Endothelial cell of umbilical vein (primary cell): ENCODE measurements at regions of chr3 and their contacts with region 1.

Region 1: GRCh38 chr3:27590437-27591298 is 106.5 kb upstream of the SLC4A7 start:
- DNase-seq: peak; percentile 95
- H3K4me3 ChIP-seq: peak overlapping the region in 1 of 3 experiments; percentile 20
- H3K27ac ChIP-seq: peak overlapping the region; percentile 98
- H3K4me1 ChIP-seq: peaks cover 30% of the 10 kb centered on the region
- H3K27me3 ChIP-seq: no peaks in the 10 kb centered on the region
- CTCF ChIP-seq: no peak
- POLR2A ChIP-seq: peak; percentile 86

Region 2: DNA sequence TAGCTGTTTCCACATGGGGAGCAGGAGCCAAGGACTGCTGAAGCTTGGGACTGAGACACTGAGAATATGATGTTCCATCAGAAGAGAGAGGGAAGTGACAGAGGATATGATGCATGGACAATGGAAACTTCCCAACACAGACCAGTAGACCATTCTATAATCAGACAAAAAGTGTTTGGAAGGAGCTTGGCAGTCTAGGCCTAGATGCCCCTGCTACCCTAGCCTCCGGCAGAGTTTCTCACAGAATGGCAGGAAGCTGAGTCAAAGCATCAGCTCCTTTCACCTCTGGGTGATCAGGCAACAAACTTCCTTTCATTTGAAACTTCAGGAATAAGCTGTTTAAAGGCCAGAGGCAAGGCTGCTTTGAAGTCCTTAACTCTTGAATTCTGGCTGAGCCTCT is 443.5 kb before region 1 on chr3:
- CTCF ChIA-PET with region 1: no interaction called
- POLR2A ChIA-PET with region 1: no interaction called
- dilution Hi-C with region 1: no loop called
- intact Hi-C with region 1: loop called (anchors 1 kb)
- DNase-seq: peak; percentile 84
- H3K4me3 ChIP-seq: no peak overlapping the region
- H3K27ac ChIP-seq: peak overlapping the region; percentile 96
- H3K4me1 ChIP-seq: peaks cover 26% of the 10 kb centered on the region
- H3K27me3 ChIP-seq: no peaks in the 10 kb centered on the region
- CTCF ChIP-seq: no peak
- POLR2A ChIP-seq: no peak

Region 3: GRCh38 chr3:27484015-27484844 is 106.4 kb before region 1 on chr3 and contains the start of gene SLC4A7:
- CTCF ChIA-PET with region 1: interaction called, 5 read pairs
- POLR2A ChIA-PET with region 1: interaction called, 9 read pairs
- dilution Hi-C with region 1: no loop called
- intact Hi-C with region 1: loop called (anchors 1 kb)
- DNase-seq: peak; percentile 96
- H3K4me3 ChIP-seq: peak within 1 kb of the TSS; percentile 79 to 93 (median 88)
- H3K27ac ChIP-seq: peak within 1 kb of the TSS; percentile 67
- H3K4me1 ChIP-seq: peaks cover 29% of the 10 kb centered on the region
- H3K27me3 ChIP-seq: no peaks in the 10 kb centered on the region
- CTCF ChIP-seq: no peak
- POLR2A ChIP-seq: peak; percentile 96
- total RNA-seq, gene SLC4A7: 50.9 and 58.6 TPM in 2 replicates

Region 4: GRCh38 chr3:27559835-27560234 is 30.8 kb before region 1 on chr3:
- CTCF ChIA-PET with region 1: interaction called, 10 read pairs
- POLR2A ChIA-PET with region 1: interaction called, 6 read pairs
- dilution Hi-C with region 1: no loop called
- intact Hi-C with region 1: loop called (anchors 1 kb)
- DNase-seq: peak; percentile 99
- H3K4me3 ChIP-seq: no peak overlapping the region
- H3K27ac ChIP-seq: peak overlapping the region; percentile 85
- H3K4me1 ChIP-seq: peaks cover 18% of the 10 kb centered on the region
- H3K27me3 ChIP-seq: no peaks in the 10 kb centered on the region
- CTCF ChIP-seq: no peak
- POLR2A ChIP-seq: peak; percentile 27

Region 5: GRCh38 chr3:27623085-27623753 is 32.6 kb after region 1 on chr3:
- CTCF ChIA-PET with region 1: interaction called, 5 read pairs
- POLR2A ChIA-PET with region 1: no interaction called
- dilution Hi-C with region 1: no loop called
- intact Hi-C with region 1: loop called (anchors 1 kb)
- DNase-seq: peak; percentile 74
- H3K4me3 ChIP-seq: no peak overlapping the region
- H3K27ac ChIP-seq: peak overlapping the region; percentile 94
- H3K4me1 ChIP-seq: peaks cover 40% of the 10 kb centered on the region
- H3K27me3 ChIP-seq: no peaks in the 10 kb centered on the region
- CTCF ChIP-seq: no peak
- POLR2A ChIP-seq: no peak

Region 6: DNA sequence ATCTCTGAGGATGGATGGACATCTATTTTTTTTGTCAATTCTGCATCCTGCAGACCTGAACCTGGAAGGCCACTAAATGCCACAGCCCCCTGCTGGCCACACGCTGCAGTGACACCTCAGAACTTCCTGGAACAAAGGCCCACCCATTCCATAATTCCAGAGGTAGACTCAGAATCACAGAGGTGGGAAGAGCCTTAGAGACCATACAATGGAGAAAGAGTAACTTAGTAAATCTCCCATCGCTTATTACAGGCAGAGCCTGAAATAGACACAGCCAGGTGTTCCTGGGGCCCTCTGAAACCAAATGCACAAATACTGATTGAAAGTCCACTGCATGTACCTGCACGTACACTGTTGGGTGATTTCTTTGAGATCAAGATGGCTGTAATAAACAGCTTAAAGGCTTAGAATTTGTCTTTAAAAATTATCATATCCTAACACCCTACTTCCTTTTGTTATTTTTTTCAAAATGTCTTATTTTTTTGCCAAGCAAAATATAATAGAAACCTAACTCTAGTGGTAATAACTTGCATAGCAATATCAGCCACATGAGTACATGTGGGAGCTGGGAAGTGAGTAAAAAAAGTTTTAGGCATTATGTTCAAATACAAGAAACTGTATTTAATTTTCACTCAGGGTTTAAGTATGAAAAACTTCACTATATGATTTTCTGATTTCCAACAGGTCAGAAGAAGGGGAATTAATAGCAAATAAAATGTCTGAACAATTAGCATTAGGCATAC is 68.8 kb after region 1 on chr3:
- CTCF ChIA-PET with region 1: interaction called, 4 read pairs
- POLR2A ChIA-PET with region 1: no interaction called
- dilution Hi-C with region 1: no loop called
- intact Hi-C with region 1: loop called (anchors 1 kb)
- DNase-seq: peak; percentile 55
- H3K4me3 ChIP-seq: no peak overlapping the region
- H3K27ac ChIP-seq: no peak overlapping the region
- H3K4me1 ChIP-seq: peaks cover 13% of the 10 kb centered on the region
- H3K27me3 ChIP-seq: no peaks in the 10 kb centered on the region
- CTCF ChIP-seq: peak; percentile 74 to 91
- POLR2A ChIP-seq: no peak

Region 7: GRCh38 chr3:27721717-27722542 is 131.3 kb after region 1 on chr3 and contains the start of gene EOMES:
- CTCF ChIA-PET with region 1: no interaction called
- POLR2A ChIA-PET with region 1: no interaction called
- dilution Hi-C with region 1: no loop called
- intact Hi-C with region 1: loop called (anchors 1 kb)
- DNase-seq: peak; percentile 29
- H3K4me3 ChIP-seq: peak within 1 kb of the TSS in 2 of 3 experiments; percentile 18 to 20
- H3K27ac ChIP-seq: no peak within 1 kb of the TSS
- H3K4me1 ChIP-seq: peaks cover 9% of the 10 kb centered on the region
- H3K27me3 ChIP-seq: peaks cover 79 to 99% of the 10 kb centered on the region in 2 experiments
- CTCF ChIP-seq: peak; percentile 3 to 36
- POLR2A ChIP-seq: no peak
- total RNA-seq, gene EOMES: not detected in 2 replicates